Astrocyte of the spinal cord (primary cell): ENCODE measurements at regions of chr1 and their contacts with region 1.

Region 1: GRCh38 chr1:202315576-202316168 is 26.1 kb downstream of the UBE2T start:
- DNase-seq: peak; percentile 72
- H3K4me3 ChIP-seq: no peak overlapping the region
- CTCF ChIP-seq: peak; percentile 99

Region 2: DNA sequence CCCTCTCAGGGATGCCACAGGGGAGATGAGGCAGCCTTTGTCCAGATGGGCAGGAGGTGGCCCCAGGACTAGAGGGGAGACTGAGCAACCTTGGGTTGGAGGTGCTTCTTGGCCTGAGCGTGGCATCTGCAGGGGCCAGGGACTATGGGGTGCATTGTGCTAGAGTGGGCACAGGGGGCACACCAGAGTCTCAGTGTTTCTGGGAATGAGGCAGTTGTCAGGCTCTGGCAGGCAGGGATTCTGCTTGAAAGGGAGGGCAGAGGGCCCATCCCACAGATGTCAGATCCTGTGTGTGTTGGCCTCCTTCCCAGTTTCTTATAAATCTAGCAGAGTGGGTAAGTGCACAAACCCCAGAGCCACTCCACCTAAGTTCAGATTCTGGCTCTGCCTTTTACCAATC is 108.4 kb before region 1 on chr1:
- in situ Hi-C with region 1: loop called (anchors 25 kb)
- DNase-seq: peak; percentile 84
- H3K4me3 ChIP-seq: no peak overlapping the region
- CTCF ChIP-seq: peak; percentile 47

Region 3: DNA sequence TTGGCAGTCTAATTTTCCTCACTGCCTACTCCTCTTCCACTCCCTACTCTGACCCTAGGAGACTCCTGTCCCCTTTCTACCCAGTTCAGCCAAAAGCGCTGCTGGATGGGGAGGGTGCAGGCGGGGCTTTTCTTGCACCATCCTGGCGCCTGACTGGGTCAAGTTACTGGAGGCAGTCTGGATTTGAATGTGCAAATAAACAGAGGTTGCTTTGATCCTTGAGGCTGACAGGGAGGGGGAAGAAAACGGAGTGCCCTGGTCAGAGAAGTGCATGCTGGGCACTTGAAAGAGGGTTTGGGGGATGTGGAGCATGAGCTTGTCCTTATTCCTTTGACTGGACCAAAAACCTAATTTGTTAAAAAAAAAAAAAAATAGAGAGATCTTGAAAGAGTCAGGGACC is 1680.5 kb after region 1 on chr1:
- in situ Hi-C with region 1: no loop called
- DNase-seq: no peak
- H3K4me3 ChIP-seq: no peak overlapping the region
- CTCF ChIP-seq: no peak